ENCODE measurements at regions of chr2 and their contacts with region 1.

Region 1: GRCh38 chr2:240056678-240057077 is 3.4 kb upstream of the OR6B3 start:
- DNase-seq: no peak
- CTCF ChIP-seq: no peak

Region 2: GRCh38 chr2:240143801-240144648 is 87.3 kb after region 1 on chr2:
- in situ Hi-C with region 1: loop called (anchors 5 kb)
- DNase-seq: peak; percentile 89
- CTCF ChIP-seq: peak; percentile 96

Region 3: GRCh38 chr2:241324775-241325174 is 1268.1 kb after region 1 on chr2:
- in situ Hi-C with region 1: no loop called
- DNase-seq: no peak
- CTCF ChIP-seq: no peak